Naive thymus-derived CD4-positive, alpha-beta T cell (primary cell): ENCODE measurements at regions of chr18 and their contacts with region 1.

Region 1: DNA sequence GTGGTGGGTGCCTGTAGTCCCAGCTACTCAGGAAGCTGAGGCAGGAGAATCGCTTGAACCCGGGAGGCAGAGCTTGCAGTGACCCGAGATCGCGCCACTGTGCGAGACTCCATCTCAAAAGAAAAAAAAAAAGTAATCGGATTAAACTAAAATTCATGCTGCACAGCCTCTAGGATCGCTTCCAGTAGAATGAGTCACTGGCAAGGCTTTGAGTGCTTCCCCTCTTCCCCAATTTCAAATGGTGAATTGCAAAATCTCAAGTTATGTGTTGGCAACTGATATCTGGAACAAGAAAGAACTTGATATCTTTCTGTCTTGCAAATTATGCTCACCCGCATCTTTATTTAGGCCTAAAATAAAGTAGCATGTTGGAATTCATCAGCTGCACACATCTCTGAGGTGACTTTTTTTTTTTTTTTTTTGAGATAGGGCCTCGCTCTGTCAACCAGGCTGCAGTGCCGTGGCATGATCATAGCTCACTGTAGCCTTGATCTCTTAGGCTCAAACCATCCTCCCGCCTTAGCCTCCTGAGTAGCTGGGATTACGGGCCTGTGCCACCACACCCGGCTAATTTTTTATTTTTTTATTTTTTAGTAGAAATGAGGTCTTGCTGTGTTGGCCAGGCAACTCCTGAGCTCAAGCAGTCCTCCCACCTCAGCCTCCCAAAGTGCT is 12.7 kb downstream of the TTC39C start:
- DNase-seq: no peak
- ATAC-seq: peak; percentile 53
- H3K4me3 ChIP-seq: no peak overlapping the region
- H3K4me3 Mint-ChIP-seq: peak overlapping the region in 4 of 10 donors; percentile 13 to 97 (median 48)
- H3K27ac ChIP-seq: no peak overlapping the region
- H3K27ac Mint-ChIP-seq: peak overlapping the region in 3 of 9 donors; percentile 2 to 80 (median 6)
- H3K4me1 ChIP-seq: peaks cover 47 to 49% of the 10 kb centered on the region in 2 donors
- H3K4me1 Mint-ChIP-seq: peaks cover 72 to 95% (median 88%) of the 10 kb centered on the region in 7 donors
- H3K27me3 ChIP-seq: no peaks in the 10 kb centered on the region
- H3K27me3 Mint-ChIP-seq: no peaks in the 10 kb centered on the region

Region 2: GRCh38 chr18:24039671-24040070 is 12.4 kb after region 1 on chr18:
- CTCF ChIA-PET with region 1: no interaction called
- POLR2A ChIA-PET with region 1: interaction called, 4 read pairs
- intact Hi-C with region 1: loop called in 1 of 2 experiments (anchors 1 kb)
- DNase-seq: no peak
- ATAC-seq: peak; percentile 67
- H3K4me3 ChIP-seq: no peak overlapping the region
- H3K4me3 Mint-ChIP-seq: peak overlapping the region in 8 of 10 donors; percentile 10 to 56 (median 24)
- H3K27ac ChIP-seq: no peak overlapping the region
- H3K27ac Mint-ChIP-seq: peak overlapping the region in 5 of 9 donors; percentile 14 to 73 (median 54)
- H3K4me1 ChIP-seq: peaks cover 40 to 47% of the 10 kb centered on the region in 2 donors
- H3K4me1 Mint-ChIP-seq: peaks cover 42 to 99% (median 95%) of the 10 kb centered on the region in 7 donors
- H3K27me3 ChIP-seq: no peaks in the 10 kb centered on the region
- H3K27me3 Mint-ChIP-seq: no peaks in the 10 kb centered on the region